ENCODE measurements at regions of chr3 and their contacts with region 1.

Region 1: GRCh38 chr3:136752422-136753325 is 496 bp upstream of the STAG1 start:
- DNase-seq: peak; percentile 100
- H3K4me3 Mint-ChIP-seq: peak overlapping the region; percentile 81
- H3K27ac Mint-ChIP-seq: peak overlapping the region; percentile 95
- H3K4me1 Mint-ChIP-seq: peaks cover 34% of the 10 kb centered on the region
- H3K27me3 Mint-ChIP-seq: no peaks in the 10 kb centered on the region

Region 2: GRCh38 chr3:136196401-136197158 is 556.1 kb before region 1 on chr3:
- intact Hi-C with region 1: loop called (anchors 1 kb)
- DNase-seq: peak; percentile 99
- H3K4me3 Mint-ChIP-seq: peak overlapping the region; percentile 98
- H3K27ac Mint-ChIP-seq: peak overlapping the region; percentile 96
- H3K4me1 Mint-ChIP-seq: peaks cover 43% of the 10 kb centered on the region
- H3K27me3 Mint-ChIP-seq: peaks cover 7% of the 10 kb centered on the region

Region 3: DNA sequence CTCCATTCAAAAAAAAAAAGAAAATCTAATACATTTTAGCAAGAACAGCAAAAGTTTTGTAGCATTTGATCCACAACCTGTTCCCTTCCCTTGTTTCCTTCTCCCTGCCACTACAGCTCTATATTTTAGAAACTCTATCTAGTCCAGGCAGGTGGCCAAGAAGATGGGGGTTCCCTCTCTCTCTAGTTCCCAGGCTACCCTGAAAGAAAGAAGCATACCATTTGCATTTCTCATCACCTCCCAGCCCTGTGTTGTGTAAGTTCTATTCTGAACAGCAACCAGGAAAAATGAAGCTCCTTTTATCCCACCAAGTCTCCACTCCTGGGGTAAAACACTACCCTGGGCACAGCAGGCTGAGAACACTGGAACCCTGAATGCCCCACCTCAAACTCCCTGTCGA is 402.5 kb before region 1 on chr3:
- intact Hi-C with region 1: loop called (anchors 5 kb)
- DNase-seq: no peak
- H3K4me3 Mint-ChIP-seq: no peak overlapping the region
- H3K27ac Mint-ChIP-seq: no peak overlapping the region
- H3K4me1 Mint-ChIP-seq: peaks cover 8% of the 10 kb centered on the region
- H3K27me3 Mint-ChIP-seq: no peaks in the 10 kb centered on the region

Region 4: GRCh38 chr3:136595913-136596697 is 156.6 kb before region 1 on chr3:
- intact Hi-C with region 1: loop called (anchors 1 kb)
- DNase-seq: no peak
- H3K4me3 Mint-ChIP-seq: peak overlapping the region; percentile 62
- H3K27ac Mint-ChIP-seq: peak overlapping the region; percentile 52
- H3K4me1 Mint-ChIP-seq: peaks cover 15% of the 10 kb centered on the region
- H3K27me3 Mint-ChIP-seq: no peaks in the 10 kb centered on the region

Region 5: GRCh38 chr3:136772709-136773108 is 20.0 kb after region 1 on chr3:
- intact Hi-C with region 1: no loop called
- DNase-seq: no peak
- H3K4me3 Mint-ChIP-seq: no peak overlapping the region
- H3K27ac Mint-ChIP-seq: no peak overlapping the region
- H3K4me1 Mint-ChIP-seq: no peaks in the 10 kb centered on the region
- H3K27me3 Mint-ChIP-seq: no peaks in the 10 kb centered on the region

Region 6: DNA sequence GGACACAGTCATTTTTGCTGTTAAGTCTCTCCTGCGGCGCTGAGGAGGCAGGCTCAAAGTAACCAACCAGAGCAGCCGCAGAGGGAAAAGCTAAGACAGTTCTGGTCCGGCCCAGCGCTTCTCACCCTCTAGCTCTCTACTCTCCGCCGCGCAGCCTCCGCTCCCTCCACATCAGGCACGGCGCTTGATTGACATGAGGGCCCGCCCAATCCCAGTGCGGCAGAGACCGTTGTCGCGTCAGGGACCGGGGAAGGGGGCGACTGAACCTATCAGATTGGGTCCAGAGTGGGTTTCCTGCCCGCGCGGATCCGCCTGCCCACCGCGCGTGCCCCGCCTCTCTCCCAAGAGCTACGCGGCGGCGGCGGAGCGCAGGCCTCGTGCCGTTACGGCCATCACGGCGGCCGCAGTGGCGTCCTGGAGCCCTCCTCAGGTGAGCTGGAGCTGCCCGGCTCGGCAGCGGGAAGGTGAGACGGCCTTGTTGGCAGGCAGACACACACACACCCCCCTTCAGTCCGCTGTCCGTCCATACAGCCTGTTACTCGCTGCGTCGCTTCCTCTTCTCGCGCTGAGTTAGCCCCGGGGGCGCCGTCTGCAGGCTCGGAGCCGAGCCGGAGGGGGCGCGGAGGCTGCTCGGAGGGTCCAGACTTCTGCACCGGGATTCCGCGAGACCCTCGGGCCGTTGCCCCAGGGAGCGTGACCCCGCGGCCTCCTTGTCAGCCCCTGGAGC is 109.4 kb after region 1 on chr3 and contains the start of gene NCK1:
- intact Hi-C with region 1: loop called (anchors 1 kb)
- DNase-seq: peak; percentile 99
- H3K4me3 Mint-ChIP-seq: peak within 1 kb of the TSS; percentile 97
- H3K27ac Mint-ChIP-seq: peak within 1 kb of the TSS; percentile 99
- H3K4me1 Mint-ChIP-seq: peaks cover 40% of the 10 kb centered on the region
- H3K27me3 Mint-ChIP-seq: no peaks in the 10 kb centered on the region
- total RNA-seq, gene NCK1: 34.7 and 35.3 TPM in 2 replicates